GM10248 (cell line): ENCODE measurements at regions of chr2 and their contacts with region 1.

Region 1: GRCh38 chr2:61538200-61538919 is at the start of gene XPO1:
- DNase-seq: peak; percentile 98
- CTCF ChIP-seq: peak; percentile 0

Region 2: GRCh38 chr2:61499060-61499459 is 39.3 kb before region 1 on chr2:
- CTCF ChIA-PET with region 1: no interaction called
- POLR2A ChIA-PET with region 1: no interaction called
- DNase-seq: no peak
- CTCF ChIP-seq: no peak

Region 3: DNA sequence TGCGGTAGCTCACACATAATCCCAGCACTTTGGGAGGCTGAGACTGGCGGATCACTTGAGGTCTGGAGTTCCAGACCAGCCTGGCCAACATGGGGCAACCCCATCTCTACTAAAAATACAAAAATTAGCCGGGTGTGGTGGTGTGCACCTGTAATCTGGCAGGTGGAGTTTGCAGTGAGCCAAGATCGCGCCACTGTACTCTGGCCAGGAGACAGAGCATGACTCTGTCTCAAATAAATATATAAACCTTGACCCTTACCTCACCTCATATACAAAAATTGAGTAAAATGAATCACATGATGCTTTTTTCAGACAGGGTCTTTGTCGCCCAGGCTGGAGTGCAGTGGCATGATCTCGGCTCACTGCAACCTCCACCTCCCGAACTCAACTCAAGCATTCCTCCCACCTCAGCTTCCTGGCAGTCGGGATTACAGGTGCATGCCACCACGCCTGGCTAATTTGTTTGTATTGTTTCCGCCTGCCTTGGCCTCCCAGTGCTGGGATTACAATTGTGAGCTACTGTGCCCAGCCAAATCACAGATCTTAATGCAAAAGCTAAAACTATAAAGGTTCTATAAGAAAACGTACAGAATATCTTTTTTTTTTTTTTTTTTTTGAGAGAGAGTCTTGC is 25.5 kb before region 1 on chr2:
- CTCF ChIA-PET with region 1: interaction called, 12 read pairs
- POLR2A ChIA-PET with region 1: interaction called, 5 read pairs
- DNase-seq: no peak
- CTCF ChIP-seq: no peak

Region 4: GRCh38 chr2:61575447-61575859 is 37.1 kb after region 1 on chr2:
- CTCF ChIA-PET with region 1: no interaction called
- POLR2A ChIA-PET with region 1: interaction called, 10 read pairs
- DNase-seq: peak; percentile 56
- CTCF ChIP-seq: no peak

Region 5: GRCh38 chr2:61750624-61751023 is 212.3 kb after region 1 on chr2:
- CTCF ChIA-PET with region 1: no interaction called
- POLR2A ChIA-PET with region 1: no interaction called
- DNase-seq: no peak
- CTCF ChIP-seq: no peak